CD8-positive, alpha-beta memory T cell (primary cell): ENCODE measurements at regions of chr1 and their contacts with region 1.

Region 1: GRCh38 chr1:168348146-168348709 is 67.6 kb downstream of the TBX19 start:
- DNase-seq: peak in 2 of 5 donors; percentile 34 to 45
- H3K4me3 ChIP-seq: peak overlapping the region; percentile 70
- H3K4me3 Mint-ChIP-seq: peak overlapping the region; percentile 84 to 92 (median 90)
- H3K27ac ChIP-seq: peak overlapping the region; percentile 47
- H3K27ac Mint-ChIP-seq: peak overlapping the region; percentile 66 to 96 (median 92)
- H3K4me1 ChIP-seq: peaks cover 8% of the 10 kb centered on the region
- H3K4me1 Mint-ChIP-seq: peaks cover 23 to 25% (median 25%) of the 10 kb centered on the region in 3 donors
- H3K27me3 ChIP-seq: no peaks in the 10 kb centered on the region
- H3K27me3 Mint-ChIP-seq: peaks cover 0 to 2% of the 10 kb centered on the region in 2 donors

Region 2: DNA sequence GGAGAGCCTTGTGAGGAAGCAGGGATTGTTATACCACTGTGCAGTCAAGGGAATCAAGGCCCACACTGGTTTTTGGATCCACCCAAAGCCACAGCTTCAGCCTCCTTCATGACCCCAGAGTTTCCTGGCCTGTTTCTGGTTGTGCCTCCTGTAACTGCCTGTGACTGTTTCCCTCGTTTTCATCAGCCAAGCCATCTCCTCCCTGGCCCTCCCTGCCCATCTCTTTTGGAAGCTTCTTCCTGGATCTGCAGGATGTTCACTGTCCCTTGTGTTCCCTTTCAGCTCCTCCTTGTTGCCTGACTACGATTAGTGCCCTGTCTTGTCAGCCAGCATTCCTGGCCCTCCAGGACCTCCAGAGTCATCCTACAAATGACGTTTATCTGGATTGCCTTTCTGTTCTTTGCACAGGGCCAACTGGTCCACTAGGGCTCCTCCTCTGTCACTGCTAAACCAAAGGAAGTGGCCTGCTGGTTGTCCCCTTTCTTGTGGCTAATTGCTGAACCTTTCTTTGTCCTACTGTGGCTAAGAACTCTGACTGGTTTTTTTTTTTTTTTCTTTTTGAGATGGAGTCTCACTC is 104.5 kb before region 1 on chr1:
- CTCF ChIA-PET with region 1: no interaction called
- POLR2A ChIA-PET with region 1: no interaction called
- DNase-seq: peak in 1 of 5 donors; percentile 9
- H3K4me3 ChIP-seq: no peak overlapping the region
- H3K4me3 Mint-ChIP-seq: peak overlapping the region in 3 of 7 donors; percentile 5 to 34 (median 13)
- H3K27ac ChIP-seq: no peak overlapping the region
- H3K27ac Mint-ChIP-seq: peak overlapping the region in 6 of 8 donors; percentile 25 to 84 (median 74)
- H3K4me1 ChIP-seq: peaks cover 9% of the 10 kb centered on the region
- H3K4me1 Mint-ChIP-seq: peaks cover 48 to 62% (median 52%) of the 10 kb centered on the region in 3 donors
- H3K27me3 ChIP-seq: no peaks in the 10 kb centered on the region
- H3K27me3 Mint-ChIP-seq: no peaks in the 10 kb centered on the region

Region 3: GRCh38 chr1:168365719-168366479 is 17.7 kb after region 1 on chr1:
- CTCF ChIA-PET with region 1: interaction called, 125 read pairs
- POLR2A ChIA-PET with region 1: interaction called, 10 read pairs
- DNase-seq: no peak
- H3K4me3 ChIP-seq: no peak overlapping the region
- H3K4me3 Mint-ChIP-seq: no peak overlapping the region
- H3K27ac ChIP-seq: no peak overlapping the region
- H3K27ac Mint-ChIP-seq: peak overlapping the region in 1 of 8 donors; percentile 7
- H3K4me1 ChIP-seq: peaks cover 27% of the 10 kb centered on the region
- H3K4me1 Mint-ChIP-seq: peaks cover 40 to 47% (median 45%) of the 10 kb centered on the region in 3 donors
- H3K27me3 ChIP-seq: no peaks in the 10 kb centered on the region
- H3K27me3 Mint-ChIP-seq: no peaks in the 10 kb centered on the region